ENCODE measurements at regions of chr12 and their contacts with region 1.

Region 1: GRCh38 chr12:51980051-51980808 is 26.5 kb upstream of the TAMALIN start:
- DNase-seq: no peak
- H3K4me3 ChIP-seq: no peak overlapping the region
- H3K27ac ChIP-seq: no peak overlapping the region
- H3K27me3 ChIP-seq: no peaks in the 10 kb centered on the region
- CTCF ChIP-seq: peak; percentile 98

Region 2: DNA sequence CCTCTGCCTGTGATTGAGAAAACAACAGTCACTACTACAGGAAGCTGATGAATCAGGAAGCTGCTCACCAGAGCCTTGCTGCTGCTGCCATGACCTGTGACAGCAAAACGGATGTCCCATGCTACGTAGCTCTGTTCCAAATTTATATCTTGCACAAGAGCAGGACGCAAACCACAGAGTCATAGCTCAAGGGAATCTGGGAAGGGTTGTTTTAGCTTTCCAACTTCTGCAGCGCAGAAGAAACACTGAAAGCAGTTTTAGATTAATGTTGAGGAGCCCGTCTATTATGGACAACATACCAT is 94.3 kb before region 1 on chr12:
- CTCF ChIA-PET with region 1: interaction called, 38 read pairs
- POLR2A ChIA-PET with region 1: interaction called, 9 read pairs
- DNase-seq: peak; percentile 81
- H3K4me3 ChIP-seq: 0 out of 2 replicates have a peak overlapping the region, but pooled peaks have one; percentile 13
- H3K27ac ChIP-seq: peak overlapping the region; percentile 65
- H3K27me3 ChIP-seq: no peaks in the 10 kb centered on the region
- CTCF ChIP-seq: no peak

Region 3: DNA sequence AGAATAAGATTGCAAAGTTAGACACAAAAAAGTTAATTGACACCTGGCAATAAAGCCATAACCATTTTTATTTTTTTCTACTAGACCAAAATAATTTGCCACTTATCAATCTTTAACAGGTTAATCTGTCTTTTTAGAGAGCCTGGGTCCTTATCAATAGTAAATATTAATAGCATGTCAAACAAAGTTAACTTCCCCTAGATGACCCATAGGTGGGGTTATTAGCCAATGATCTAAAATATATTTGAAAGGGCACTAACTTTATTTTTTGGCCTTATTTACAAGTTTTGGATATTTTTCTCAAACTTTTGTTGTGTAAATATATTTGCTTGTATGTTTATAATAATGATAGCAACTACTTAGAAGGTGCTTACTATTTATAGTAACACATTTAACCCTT is 88.4 kb before region 1 on chr12:
- CTCF ChIA-PET with region 1: interaction called, 38 read pairs
- POLR2A ChIA-PET with region 1: interaction called, 9 read pairs
- DNase-seq: no peak
- H3K4me3 ChIP-seq: no peak overlapping the region
- H3K27ac ChIP-seq: no peak overlapping the region
- H3K27me3 ChIP-seq: no peaks in the 10 kb centered on the region
- CTCF ChIP-seq: peak; percentile 52

Region 4: GRCh38 chr12:52004042-52004648 is 23.9 kb after region 1 on chr12:
- CTCF ChIA-PET with region 1: interaction called, 11 read pairs
- POLR2A ChIA-PET with region 1: no interaction called
- DNase-seq: no peak
- H3K4me3 ChIP-seq: no peak overlapping the region
- H3K27ac ChIP-seq: no peak overlapping the region
- H3K27me3 ChIP-seq: peaks cover 6% of the 10 kb centered on the region
- CTCF ChIP-seq: peak; percentile 83

Region 5: DNA sequence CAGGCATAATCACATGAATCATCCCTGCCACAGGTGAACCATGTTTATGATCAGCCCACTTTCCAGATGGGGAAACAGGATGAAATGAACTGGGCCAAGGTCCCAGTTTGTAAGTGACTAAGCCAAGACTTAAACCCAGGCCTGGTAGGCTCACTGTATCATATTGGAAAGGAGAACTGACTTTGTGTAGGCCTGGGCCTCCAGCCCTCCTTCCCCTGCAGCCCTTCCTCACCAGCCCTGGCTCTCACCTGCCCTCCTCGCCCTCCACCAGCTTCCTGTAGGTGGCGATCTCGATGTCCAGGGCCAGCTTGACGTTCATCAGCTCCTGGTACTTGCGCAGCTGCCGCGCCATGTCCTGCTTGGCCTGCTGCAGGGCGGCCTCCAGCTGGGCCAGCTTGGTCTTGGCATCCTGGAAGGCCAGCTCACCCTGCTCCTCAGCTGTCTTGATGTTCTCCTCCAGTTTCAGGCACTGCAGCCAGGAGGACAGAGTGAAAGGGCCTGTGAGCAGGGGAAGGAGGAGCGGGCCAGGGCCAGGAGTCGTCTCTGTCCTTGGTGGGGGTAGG is 191.8 kb after region 1 on chr12:
- CTCF ChIA-PET with region 1: no interaction called
- POLR2A ChIA-PET with region 1: no interaction called
- DNase-seq: no peak
- H3K4me3 ChIP-seq: no peak overlapping the region
- H3K27ac ChIP-seq: no peak overlapping the region
- H3K27me3 ChIP-seq: no peaks in the 10 kb centered on the region
- CTCF ChIP-seq: peak; percentile 37

Measured in AG04450 (cell line).